ENCODE measurements at regions of chr11 and their contacts with region 1.

Region 1: DNA sequence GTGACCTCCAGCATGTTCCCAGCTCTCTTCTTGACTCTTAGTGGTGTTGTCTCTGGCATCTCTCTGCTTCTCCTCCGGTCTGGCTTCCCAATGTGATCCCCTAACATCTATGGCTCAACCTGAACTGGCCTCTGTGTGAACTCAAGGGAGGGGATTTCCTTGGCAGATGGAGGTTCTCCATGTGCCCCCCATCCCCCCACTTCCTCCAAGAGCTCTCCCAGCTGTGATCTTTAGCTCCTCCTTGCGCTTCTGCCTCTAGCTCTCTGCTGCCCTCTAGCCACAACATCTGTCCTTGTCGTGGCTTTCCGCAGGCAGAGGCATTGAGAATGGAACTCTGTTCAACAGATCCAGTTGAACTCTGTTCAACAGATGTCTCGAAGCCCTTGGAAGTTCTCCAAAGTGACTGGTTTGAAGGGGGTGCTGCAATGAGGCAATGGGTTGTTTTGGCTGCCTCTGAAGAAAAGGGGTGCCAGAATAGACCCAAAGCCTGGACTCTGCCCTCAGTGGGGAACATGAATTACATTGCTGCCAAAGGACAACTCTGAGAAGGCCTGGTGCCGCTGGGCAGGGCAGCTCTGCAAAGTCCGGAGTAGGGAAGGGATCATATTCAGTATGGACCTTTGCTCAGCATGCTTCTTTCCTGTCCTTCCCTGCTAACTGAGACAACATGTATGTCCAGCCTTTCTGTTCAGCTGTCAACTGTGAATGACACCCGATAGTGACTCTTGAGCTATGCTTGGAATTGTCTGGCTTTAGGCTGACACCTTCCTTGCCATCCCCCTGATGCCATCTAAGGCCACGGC is 61.9 kb downstream of the ADM start:
- DNase-seq: peak; percentile 92
- ATAC-seq: peak; percentile 97
- H3K4me3 ChIP-seq: no peak overlapping the region
- H3K27ac ChIP-seq: peak overlapping the region; percentile 11; the same call in 1 of the 2 replicates
- H3K4me1 ChIP-seq: peaks cover 3 to 15% of the 10 kb centered on the region in 2 experiments; a peak in 3 of 4 replicates
- H3K27me3 ChIP-seq: no peaks in the 10 kb centered on the region
- CTCF ChIP-seq: peak; percentile 94 to 99 (median 99)
- POLR2A ChIP-seq: no peak
- RAD21 ChIP-seq: peak; percentile 97

Region 2: DNA sequence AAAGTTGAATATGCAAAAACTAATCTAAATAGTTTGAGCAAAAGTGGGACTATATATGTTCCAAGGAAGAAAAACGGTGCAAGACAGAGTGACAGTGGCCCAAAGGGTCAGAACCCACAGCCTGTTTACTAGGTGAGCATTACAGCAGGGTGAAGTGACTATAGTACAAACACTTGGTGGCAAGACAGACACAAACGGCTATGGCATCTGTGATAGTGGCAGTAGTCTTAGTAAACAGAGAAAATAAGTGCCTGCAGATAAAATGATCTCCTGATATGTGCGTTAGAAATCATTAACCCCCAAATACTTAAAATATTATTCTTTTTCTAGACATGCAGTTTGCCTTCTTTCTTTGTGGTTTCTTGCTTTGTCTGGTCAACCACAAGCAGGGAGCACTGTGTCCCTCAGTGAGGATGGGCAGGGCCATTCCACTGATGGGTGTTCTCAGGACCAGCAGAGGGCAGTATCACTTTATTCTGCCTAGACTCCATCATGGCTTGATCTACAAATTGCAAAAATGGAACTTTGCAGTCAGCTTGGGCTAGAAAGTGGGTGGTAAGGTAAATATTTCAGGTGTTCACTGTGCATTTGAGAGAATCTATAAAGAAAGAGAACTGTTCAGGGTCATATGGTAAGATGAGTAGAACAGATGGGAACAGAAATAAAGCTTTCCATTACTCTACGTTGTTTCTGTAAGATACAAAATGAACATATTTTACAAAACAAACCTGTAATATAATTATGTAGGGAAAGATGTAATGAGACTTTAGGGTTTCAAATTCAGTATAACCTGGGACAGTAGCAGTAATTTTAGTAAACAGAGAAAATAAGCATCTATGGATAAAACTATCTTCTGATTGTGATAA is 504.7 kb before region 1 on chr11:
- CTCF ChIA-PET with region 1: interaction called, 4 read pairs
- POLR2A ChIA-PET with region 1: no interaction called
- RAD21 ChIA-PET with region 1: no interaction called
- intact Hi-C with region 1: loop called (anchors 1 kb)
- DNase-seq: peak; percentile 31
- ATAC-seq: peak; percentile 98
- H3K4me3 ChIP-seq: no peak overlapping the region
- H3K27ac ChIP-seq: no peak overlapping the region
- H3K4me1 ChIP-seq: no peaks in the 10 kb centered on the region; a peak in 1 of 4 replicates
- H3K27me3 ChIP-seq: no peaks in the 10 kb centered on the region
- CTCF ChIP-seq: peak; percentile 78 to 90 (median 82)
- POLR2A ChIP-seq: no peak
- RAD21 ChIP-seq: peak; percentile 86

Region 3: DNA sequence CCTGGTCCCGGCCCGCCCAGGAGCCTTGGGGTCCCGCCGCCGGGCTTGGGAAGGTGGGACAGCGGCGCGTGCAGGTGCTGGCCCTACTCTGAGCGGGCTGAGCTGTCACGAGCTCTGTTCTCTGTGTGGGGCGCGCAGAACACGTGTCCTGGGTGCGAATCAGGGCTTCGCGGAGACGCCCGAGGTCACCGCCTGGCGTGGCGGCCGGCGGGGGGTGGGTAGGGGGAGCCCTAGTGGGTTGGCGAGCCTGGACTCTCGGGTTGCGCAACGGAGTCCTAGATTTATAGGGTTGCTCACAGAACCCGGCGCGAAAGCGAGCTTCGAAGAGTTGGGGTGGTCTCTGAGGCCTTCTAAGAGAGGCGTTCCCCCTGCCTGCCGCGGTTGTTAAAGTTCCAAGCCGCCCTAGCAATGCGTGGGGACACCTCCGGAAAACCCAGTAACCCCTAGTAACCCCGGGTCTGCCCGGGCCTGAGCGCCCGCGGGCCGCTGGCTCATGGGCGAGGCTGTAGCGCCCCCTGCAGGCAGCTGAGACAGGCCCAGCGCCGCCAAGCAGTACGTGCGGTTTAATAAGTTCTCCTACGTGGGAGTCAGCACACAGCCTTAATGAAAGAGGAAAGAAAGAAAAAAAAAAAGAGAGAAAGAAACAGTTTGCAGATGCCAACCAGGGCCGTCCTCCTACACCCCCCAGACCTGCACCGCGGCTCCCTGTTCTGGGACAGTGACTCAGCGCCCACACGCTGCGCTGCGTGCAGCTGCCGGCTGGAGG is 59.1 kb before region 1 on chr11:
- CTCF ChIA-PET with region 1: interaction called, 25 read pairs
- POLR2A ChIA-PET with region 1: interaction called, 14 read pairs
- RAD21 ChIA-PET with region 1: interaction called, 4 to 8 read pairs
- intact Hi-C with region 1: loop called (anchors 2 kb)
- DNase-seq: peak; percentile 84
- ATAC-seq: peak; percentile 41
- H3K4me3 ChIP-seq: peak overlapping the region; percentile 85 to 93
- H3K27ac ChIP-seq: peak overlapping the region; percentile 97
- H3K4me1 ChIP-seq: peaks cover 42 to 64% of the 10 kb centered on the region in 2 experiments
- H3K27me3 ChIP-seq: no peaks in the 10 kb centered on the region
- CTCF ChIP-seq: peak in 2 of 3 experiments; percentile 94 to 98; a peak in 4 of 6 replicates
- POLR2A ChIP-seq: peak; percentile 11
- RAD21 ChIP-seq: no peak

Region 4: GRCh38 chr11:10351768-10352641 is 14.8 kb before region 1 on chr11:
- CTCF ChIA-PET with region 1: interaction called, 29 read pairs
- POLR2A ChIA-PET with region 1: interaction called, 4 read pairs
- RAD21 ChIA-PET with region 1: interaction called in 1 of 2 experiments, 6 read pairs
- intact Hi-C with region 1: no loop called
- DNase-seq: no peak
- ATAC-seq: no peak
- H3K4me3 ChIP-seq: no peak overlapping the region
- H3K27ac ChIP-seq: no peak overlapping the region
- H3K4me1 ChIP-seq: peaks cover 34 to 43% of the 10 kb centered on the region in 2 experiments
- H3K27me3 ChIP-seq: no peaks in the 10 kb centered on the region
- CTCF ChIP-seq: no peak
- POLR2A ChIP-seq: no peak
- RAD21 ChIP-seq: no peak

Region 5: GRCh38 chr11:10400856-10401255 is 34.1 kb after region 1 on chr11:
- CTCF ChIA-PET with region 1: interaction called, 34 read pairs
- POLR2A ChIA-PET with region 1: interaction called, 5 read pairs
- RAD21 ChIA-PET with region 1: interaction called, 3 to 6 read pairs
- intact Hi-C with region 1: loop called (anchors 2 kb)
- DNase-seq: no peak
- ATAC-seq: no peak
- H3K4me3 ChIP-seq: no peak overlapping the region
- H3K27ac ChIP-seq: no peak overlapping the region
- H3K4me1 ChIP-seq: peaks cover 5 to 18% of the 10 kb centered on the region in 2 experiments; a peak in 3 of 4 replicates
- H3K27me3 ChIP-seq: no peaks in the 10 kb centered on the region
- CTCF ChIP-seq: no peak
- POLR2A ChIP-seq: no peak
- RAD21 ChIP-seq: no peak

Region 6: DNA sequence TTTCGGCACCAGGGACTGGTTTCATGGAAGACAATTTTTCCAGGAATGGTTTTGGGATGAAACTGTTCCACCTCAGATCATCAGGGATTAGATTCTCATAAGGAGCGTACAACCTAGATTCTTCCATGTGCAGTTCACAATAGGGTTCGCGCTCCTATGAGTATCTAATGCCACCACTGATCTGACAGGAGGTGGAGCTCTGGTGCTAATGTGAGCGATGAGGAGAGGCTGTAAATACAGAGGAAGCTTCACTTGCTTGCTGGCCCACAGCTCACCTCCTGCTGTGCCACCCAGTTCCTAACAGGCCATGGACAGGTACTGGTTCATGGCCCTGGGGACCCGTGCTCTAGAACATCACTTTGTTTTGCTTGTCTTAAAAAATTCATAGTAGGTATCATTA is 46.5 kb after region 1 on chr11:
- CTCF ChIA-PET with region 1: interaction called, 18 read pairs
- POLR2A ChIA-PET with region 1: interaction called, 3 read pairs
- RAD21 ChIA-PET with region 1: interaction called, 4 to 6 read pairs
- intact Hi-C with region 1: no loop called
- DNase-seq: peak; percentile 28
- ATAC-seq: peak; percentile 86
- H3K4me3 ChIP-seq: no peak overlapping the region
- H3K27ac ChIP-seq: no peak overlapping the region
- H3K4me1 ChIP-seq: peaks cover 0 to 38% of the 10 kb centered on the region in 2 experiments; a peak in 3 of 4 replicates
- H3K27me3 ChIP-seq: no peaks in the 10 kb centered on the region
- CTCF ChIP-seq: peak; percentile 34 to 75 (median 35); a peak in 4 of 6 replicates
- POLR2A ChIP-seq: no peak
- RAD21 ChIP-seq: peak; percentile 84

Region 7: GRCh38 chr11:10455637-10456487 is 89.1 kb after region 1 on chr11:
- CTCF ChIA-PET with region 1: interaction called, 13 read pairs
- POLR2A ChIA-PET with region 1: no interaction called
- RAD21 ChIA-PET with region 1: no interaction called
- intact Hi-C with region 1: loop called (anchors 5 kb)
- DNase-seq: peak; percentile 26
- ATAC-seq: peak; percentile 64
- H3K4me3 ChIP-seq: peak overlapping the region; percentile 62 to 71
- H3K27ac ChIP-seq: peak overlapping the region; percentile 77
- H3K4me1 ChIP-seq: peaks cover 36 to 65% of the 10 kb centered on the region in 2 experiments
- H3K27me3 ChIP-seq: no peaks in the 10 kb centered on the region
- CTCF ChIP-seq: no peak
- POLR2A ChIP-seq: no peak
- RAD21 ChIP-seq: no peak